ENCODE measurements at regions of chr10 and their contacts with region 1.

Region 1: GRCh38 chr10:102394079-102394800 is 1.3 kb upstream of the NFKB2 start:
- DNase-seq: peak; percentile 94
- H3K4me3 Mint-ChIP-seq: peak overlapping the region; percentile 90
- H3K27ac Mint-ChIP-seq: peak overlapping the region; percentile 88
- H3K4me1 Mint-ChIP-seq: peaks cover 16% of the 10 kb centered on the region
- H3K27me3 Mint-ChIP-seq: no peaks in the 10 kb centered on the region
- CTCF ChIP-seq: peak; percentile 23

Region 2: GRCh38 chr10:101569838-101570766 is 824.1 kb before region 1 on chr10:
- CTCF ChIA-PET with region 1: no interaction called
- intact Hi-C with region 1: no loop called
- DNase-seq: peak; percentile 76
- H3K4me3 Mint-ChIP-seq: peak overlapping the region; percentile 75
- H3K27ac Mint-ChIP-seq: no peak overlapping the region
- H3K4me1 Mint-ChIP-seq: no peaks in the 10 kb centered on the region
- H3K27me3 Mint-ChIP-seq: peaks cover 63% of the 10 kb centered on the region
- CTCF ChIP-seq: peak; percentile 85

Region 3: DNA sequence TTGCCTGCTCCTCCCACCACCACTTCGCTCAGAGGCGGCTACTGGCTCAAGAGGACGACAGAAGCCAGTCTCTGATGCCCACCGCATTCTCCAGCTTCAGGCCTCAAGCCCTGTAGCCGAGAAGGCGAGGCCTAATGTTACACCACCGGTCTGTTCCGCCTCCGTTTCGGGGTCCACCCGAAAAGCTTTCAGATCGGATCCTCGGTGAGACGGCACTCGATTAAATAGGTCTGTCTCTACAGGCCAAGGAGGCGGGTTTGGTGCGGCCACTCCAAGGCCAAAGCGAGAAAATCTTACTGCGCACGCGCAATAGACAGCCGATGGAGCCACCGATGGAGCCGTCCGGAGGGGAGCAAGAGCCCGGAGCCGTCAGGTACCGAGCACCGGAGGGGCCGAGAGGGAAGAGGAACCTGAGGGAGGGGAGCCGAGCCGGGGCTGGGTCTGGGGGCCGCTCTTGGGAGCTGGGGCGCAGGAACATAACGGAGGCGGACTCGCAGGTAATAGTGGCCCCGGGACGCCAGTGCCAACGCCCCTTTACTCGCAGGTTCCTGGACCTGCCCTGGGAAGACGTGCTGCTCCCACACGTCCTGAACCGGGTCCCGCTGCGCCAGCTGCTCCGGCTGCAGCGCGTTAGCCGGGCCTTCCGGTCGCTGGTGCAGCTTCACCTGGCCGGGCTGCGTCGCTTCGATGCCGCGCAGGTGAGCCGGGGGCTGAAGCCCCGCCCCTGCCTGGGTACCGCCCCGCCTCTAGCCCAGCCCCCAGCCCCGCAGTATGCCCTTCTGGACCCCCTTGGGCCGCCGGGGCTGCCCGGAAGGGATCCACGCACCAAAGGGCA is 26.8 kb after region 1 on chr10 and contains the start of gene FBXL15:
- CTCF ChIA-PET with region 1: interaction called, 18 read pairs
- intact Hi-C with region 1: no loop called
- DNase-seq: peak; percentile 88
- H3K4me3 Mint-ChIP-seq: peak within 1 kb of the TSS; percentile 92
- H3K27ac Mint-ChIP-seq: peak within 1 kb of the TSS; percentile 80
- H3K4me1 Mint-ChIP-seq: peaks cover 3% of the 10 kb centered on the region
- H3K27me3 Mint-ChIP-seq: peaks cover 29% of the 10 kb centered on the region
- CTCF ChIP-seq: no peak
- total RNA-seq, gene FBXL15: 5.5 and 6.4 TPM in 2 replicates